IMR-90 (cell line): ENCODE measurements at regions of chr2 and their contacts with region 1.

Region 1: GRCh38 chr2:174248187-174248997 is at the start of gene OLA1:
- DNase-seq: peak; percentile 90
- ATAC-seq: peak; percentile 100
- H3K4me3 ChIP-seq: peak within 1 kb of the TSS; percentile 89
- H3K27ac ChIP-seq: peak within 1 kb of the TSS; percentile 78
- H3K4me1 ChIP-seq: no peaks in the 10 kb centered on the region
- H3K27me3 ChIP-seq: no peaks in the 10 kb centered on the region
- CTCF ChIP-seq: no peak
- POLR2A ChIP-seq: peak; percentile 39; the same call in 1 of the 2 replicates
- RAD21 ChIP-seq: no peak
- total RNA-seq, gene OLA1: 54.7 and 118 TPM in 2 replicates

Region 2: GRCh38 chr2:174051741-174052583 is 196.4 kb before region 1 on chr2:
- CTCF ChIA-PET with region 1: no interaction called
- POLR2A ChIA-PET with region 1: no interaction called
- dilution Hi-C with region 1: no loop called
- in situ Hi-C with region 1: no loop called
- intact Hi-C with region 1: loop called (anchors 10 kb)
- DNase-seq: peak; percentile 83
- ATAC-seq: peak; percentile 95
- H3K4me3 ChIP-seq: no peak overlapping the region
- H3K27ac ChIP-seq: peak overlapping the region; percentile 58
- H3K4me1 ChIP-seq: peaks cover 18% of the 10 kb centered on the region
- H3K27me3 ChIP-seq: no peaks in the 10 kb centered on the region
- CTCF ChIP-seq: 0 out of 2 replicates have a peak, but pooled peaks have one; percentile 22
- POLR2A ChIP-seq: no peak
- RAD21 ChIP-seq: peak; percentile 25; the same call in 1 of the 2 replicates